K562 (cell line): ENCODE measurements at regions of chr11 and their contacts with region 1.

Region 1: GRCh38 chr11:36300651-36301050 is 4.6 kb downstream of the PRR5L start:
- DNase-seq: no peak
- ATAC-seq: no peak
- H3K4me3 ChIP-seq: no peak overlapping the region
- H3K27ac ChIP-seq: no peak overlapping the region
- H3K4me1 ChIP-seq: no peaks in the 10 kb centered on the region
- H3K27me3 ChIP-seq: peaks cover 5 to 11% of the 10 kb centered on the region in 2 experiments
- CTCF ChIP-seq: no peak
- EP300 ChIP-seq: no peak
- POLR2A ChIP-seq: no peak
- RAD21 ChIP-seq: no peak

Region 2: DNA sequence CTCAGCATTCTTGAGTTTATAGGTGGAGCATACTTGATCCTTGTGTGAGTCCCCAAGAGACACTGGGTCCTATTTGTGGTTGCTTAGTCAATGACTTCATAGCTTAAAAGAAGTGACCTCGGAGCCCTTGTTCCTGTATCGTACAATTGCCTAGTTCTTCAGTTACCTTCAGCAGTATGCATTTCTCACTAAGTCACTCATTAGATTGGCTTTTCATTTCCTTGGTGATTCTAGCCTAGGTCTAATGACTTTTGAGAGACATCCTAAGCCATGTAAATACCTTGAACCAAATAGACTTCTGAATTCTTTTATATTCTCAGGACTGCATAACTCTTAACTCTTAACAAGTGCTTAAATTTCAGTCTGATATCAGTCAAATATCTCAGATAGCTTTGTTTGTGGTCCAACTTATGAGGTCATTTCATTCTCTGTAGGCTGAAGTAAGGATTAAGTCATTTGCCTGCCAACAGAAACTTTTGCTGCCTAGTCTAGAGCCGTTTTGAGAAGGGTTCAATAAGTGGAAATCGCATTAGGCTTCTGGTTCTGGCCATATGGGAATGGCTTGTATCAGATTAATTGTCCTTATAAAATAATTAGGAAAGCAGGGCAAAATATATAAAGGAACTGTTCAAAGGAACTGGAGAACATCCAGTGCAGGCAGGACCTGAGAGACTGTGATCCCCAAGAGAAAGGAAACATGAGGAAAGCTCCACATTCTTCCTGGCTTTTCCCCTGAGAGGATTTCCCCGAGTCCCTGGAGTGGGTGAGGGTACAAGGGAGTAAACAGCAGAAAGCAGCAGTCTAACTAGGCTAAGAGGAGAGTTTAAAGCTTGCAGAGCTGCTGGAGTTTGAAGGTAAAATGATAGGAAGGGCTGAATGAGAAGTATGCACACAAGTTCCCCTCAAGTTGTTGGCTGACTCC is 169.5 kb after region 1 on chr11:
- CTCF ChIA-PET with region 1: no interaction called
- POLR2A ChIA-PET with region 1: no interaction called
- in situ Hi-C with region 1: loop called (anchors 5 kb)
- intact Hi-C with region 1: no loop called
- DNase-seq: no peak
- ATAC-seq: no peak
- H3K4me3 ChIP-seq: no peak overlapping the region
- H3K27ac ChIP-seq: no peak overlapping the region
- H3K4me1 ChIP-seq: no peaks in the 10 kb centered on the region
- H3K27me3 ChIP-seq: peaks cover 5 to 15% of the 10 kb centered on the region in 2 experiments; a peak in 4 of 5 replicates
- CTCF ChIP-seq: no peak
- EP300 ChIP-seq: no peak
- POLR2A ChIP-seq: no peak
- RAD21 ChIP-seq: no peak